ENCODE measurements at regions of chr13 and their contacts with region 1.

Region 1: GRCh38 chr13:75760131-75761021 is 124.2 kb downstream of the LMO7 start:
- DNase-seq: peak in 13 of 35 experiments; percentile 1 to 55 (median 14)
- ATAC-seq: peak; percentile 73 to 81 (median 77)
- H3K4me3 ChIP-seq: peak overlapping the region; percentile 30 to 35
- H3K4me3 Mint-ChIP-seq: peak overlapping the region; percentile 77 to 79 (median 79)
- H3K27ac ChIP-seq: peak overlapping the region; percentile 74
- H3K27ac Mint-ChIP-seq: peak overlapping the region; percentile 84 to 98
- H3K4me1 ChIP-seq: peaks cover 3 to 30% of the 10 kb centered on the region in 2 experiments
- H3K4me1 Mint-ChIP-seq: peaks cover 72% of the 10 kb centered on the region in 3 donors
- H3K27me3 ChIP-seq: no peaks in the 10 kb centered on the region
- H3K27me3 Mint-ChIP-seq: no peaks in the 10 kb centered on the region

Region 2: GRCh38 chr13:75696746-75697145 is 63.6 kb before region 1 on chr13:
- CTCF ChIA-PET with region 1: interaction called, 12 to 14 read pairs
- POLR2A ChIA-PET with region 1: no interaction called
- DNase-seq: no peak
- ATAC-seq: no peak
- H3K4me3 ChIP-seq: no peak overlapping the region
- H3K4me3 Mint-ChIP-seq: no peak overlapping the region
- H3K27ac ChIP-seq: no peak overlapping the region
- H3K27ac Mint-ChIP-seq: no peak overlapping the region
- H3K4me1 ChIP-seq: peaks cover 0 to 3% of the 10 kb centered on the region in 2 experiments
- H3K4me1 Mint-ChIP-seq: no peaks in the 10 kb centered on the region
- H3K27me3 ChIP-seq: no peaks in the 10 kb centered on the region
- H3K27me3 Mint-ChIP-seq: no peaks in the 10 kb centered on the region

Region 3: GRCh38 chr13:75744127-75744526 is 16.2 kb before region 1 on chr13:
- CTCF ChIA-PET with region 1: no interaction called
- POLR2A ChIA-PET with region 1: no interaction called
- DNase-seq: no peak
- ATAC-seq: no peak
- H3K4me3 ChIP-seq: no peak overlapping the region
- H3K4me3 Mint-ChIP-seq: no peak overlapping the region
- H3K27ac ChIP-seq: no peak overlapping the region
- H3K27ac Mint-ChIP-seq: no peak overlapping the region
- H3K4me1 ChIP-seq: no peaks in the 10 kb centered on the region
- H3K4me1 Mint-ChIP-seq: peaks cover 0 to 6% (median 2%) of the 10 kb centered on the region in 3 donors
- H3K27me3 ChIP-seq: no peaks in the 10 kb centered on the region
- H3K27me3 Mint-ChIP-seq: no peaks in the 10 kb centered on the region

Region 4: GRCh38 chr13:75803164-75803611 is 42.8 kb after region 1 on chr13:
- CTCF ChIA-PET with region 1: interaction called, 5 to 10 read pairs
- POLR2A ChIA-PET with region 1: interaction called in 1 of 2 experiments, 11 read pairs
- DNase-seq: peak in 32 of 35 experiments; percentile 4 to 56 (median 20)
- ATAC-seq: peak; percentile 97 to 100 (median 100)
- H3K4me3 ChIP-seq: no peak overlapping the region
- H3K4me3 Mint-ChIP-seq: peak overlapping the region in 2 of 3 donors; percentile 29 to 55
- H3K27ac ChIP-seq: peak overlapping the region; percentile 56
- H3K27ac Mint-ChIP-seq: peak overlapping the region; percentile 77 to 84
- H3K4me1 ChIP-seq: peaks cover 8 to 11% of the 10 kb centered on the region in 2 experiments
- H3K4me1 Mint-ChIP-seq: peaks cover 36 to 41% (median 40%) of the 10 kb centered on the region in 3 donors
- H3K27me3 ChIP-seq: no peaks in the 10 kb centered on the region
- H3K27me3 Mint-ChIP-seq: no peaks in the 10 kb centered on the region

Measured in T-cell (primary cell).